Right ventricle myocardium superior (tissue), 1 donor: ENCODE measurements at regions of chr15 and their contacts with region 1.

Region 1: GRCh38 chr15:79380755-79381497 is 51.2 kb upstream of the MINAR1 start:
- DNase-seq: peak; percentile 86
- ATAC-seq: peak; percentile 84

Region 2: DNA sequence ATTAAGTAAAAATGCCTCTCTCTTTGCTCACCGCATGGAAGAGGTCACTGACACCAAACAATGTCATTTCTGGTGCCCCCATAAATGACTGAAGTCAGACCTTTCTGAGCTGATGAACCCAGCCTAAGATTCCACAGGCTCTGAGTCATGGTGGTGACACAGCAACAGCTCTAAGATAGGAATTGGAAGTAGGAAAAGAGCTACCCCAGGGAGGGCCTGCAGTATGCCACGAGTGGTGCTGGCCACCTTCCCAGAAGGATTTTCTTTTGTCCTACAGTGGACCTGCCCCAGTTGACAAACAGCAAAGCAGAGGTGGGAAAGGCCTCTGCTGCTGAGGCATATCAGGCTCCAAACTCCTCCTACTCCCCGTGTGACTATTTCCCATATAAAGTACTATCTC is 259.3 kb after region 1 on chr15:
- intact Hi-C with region 1: no loop called
- DNase-seq: no peak
- ATAC-seq: peak; percentile 29

Region 3: DNA sequence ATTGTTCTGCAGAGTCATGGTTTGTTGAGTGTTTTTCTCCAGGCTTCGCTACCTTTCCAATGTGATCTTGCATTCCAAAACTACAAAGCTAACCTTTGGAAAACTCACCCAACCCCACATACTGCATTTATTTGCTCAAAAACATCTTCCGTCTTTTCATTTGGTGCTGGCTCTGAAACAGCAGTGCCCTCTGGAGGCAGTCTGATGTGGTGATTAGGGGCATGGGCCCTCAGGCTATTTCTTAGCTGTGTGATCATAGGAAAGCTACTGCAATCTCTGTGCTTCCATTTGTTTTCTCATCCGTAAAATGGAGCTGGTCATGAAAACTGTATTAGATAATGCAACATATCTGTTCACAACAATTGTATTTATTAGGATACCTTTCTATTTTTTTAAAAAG is 468.9 kb after region 1 on chr15:
- intact Hi-C with region 1: loop called (anchors 2 kb)
- DNase-seq: no peak
- ATAC-seq: no peak

Region 4: GRCh38 chr15:79989682-79990081 is 608.8 kb after region 1 on chr15:
- intact Hi-C with region 1: loop called (anchors 5 kb)
- DNase-seq: no peak
- ATAC-seq: no peak